Activated CD8-positive, alpha-beta T cell treated with anti-CD3 and anti-CD28 coated beads, Interleukin-2, amount 10 ng/mL, durations not matched to agents 7 days and 5 days (primary cell): ENCODE measurements at regions of chr1 and their contacts with region 1.

Region 1: DNA sequence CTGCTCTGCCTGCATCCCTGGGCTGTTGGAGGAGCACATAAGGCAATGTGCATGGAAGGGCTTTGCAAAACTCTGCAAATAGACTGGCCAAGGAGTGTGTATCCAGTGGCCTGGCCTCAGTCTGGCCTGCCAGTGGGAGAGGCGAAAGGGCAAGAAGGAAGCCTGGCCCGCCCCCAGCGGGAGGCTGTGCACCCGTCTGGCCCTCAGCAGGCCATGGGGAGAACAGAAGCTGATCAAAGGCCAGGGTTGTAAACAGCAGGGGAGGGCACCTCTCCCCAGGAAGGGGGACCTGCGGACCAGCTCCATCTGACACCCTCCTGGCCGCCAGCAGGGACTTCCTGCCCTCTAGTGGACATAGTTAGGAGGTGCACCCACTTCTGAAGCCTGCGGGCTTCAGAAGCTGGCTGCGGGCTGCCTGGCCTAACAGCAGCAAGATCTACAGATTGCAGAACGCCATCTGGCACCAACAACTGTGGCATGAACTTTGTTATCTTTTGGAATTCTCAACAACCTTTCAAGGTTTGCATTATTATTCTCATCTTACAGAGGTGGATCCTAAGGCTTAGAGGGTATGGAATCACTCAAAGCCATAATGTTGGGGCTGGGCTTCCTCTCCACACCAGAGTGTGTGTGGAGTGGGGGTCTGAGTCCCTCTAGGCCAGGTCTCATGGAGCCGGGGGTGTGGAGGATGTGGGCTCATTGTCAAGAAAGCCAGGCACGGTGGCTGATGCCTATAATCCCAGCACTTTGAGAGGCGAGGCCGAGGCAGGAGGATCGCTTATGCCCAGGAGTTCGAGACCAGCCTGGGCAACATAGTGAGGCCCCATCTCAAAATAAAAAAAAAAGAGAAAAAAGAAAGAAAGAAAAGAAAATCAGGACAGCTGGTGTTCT is 18.9 kb upstream of the CDK18 start:
- DNase-seq: peak; percentile 77
- ATAC-seq: peak; percentile 73
- H3K4me3 Mint-ChIP-seq: no peak overlapping the region
- H3K27ac Mint-ChIP-seq: no peak overlapping the region
- H3K4me1 Mint-ChIP-seq: peaks cover 30% of the 10 kb centered on the region
- H3K27me3 Mint-ChIP-seq: peaks cover 37% of the 10 kb centered on the region

Region 2: DNA sequence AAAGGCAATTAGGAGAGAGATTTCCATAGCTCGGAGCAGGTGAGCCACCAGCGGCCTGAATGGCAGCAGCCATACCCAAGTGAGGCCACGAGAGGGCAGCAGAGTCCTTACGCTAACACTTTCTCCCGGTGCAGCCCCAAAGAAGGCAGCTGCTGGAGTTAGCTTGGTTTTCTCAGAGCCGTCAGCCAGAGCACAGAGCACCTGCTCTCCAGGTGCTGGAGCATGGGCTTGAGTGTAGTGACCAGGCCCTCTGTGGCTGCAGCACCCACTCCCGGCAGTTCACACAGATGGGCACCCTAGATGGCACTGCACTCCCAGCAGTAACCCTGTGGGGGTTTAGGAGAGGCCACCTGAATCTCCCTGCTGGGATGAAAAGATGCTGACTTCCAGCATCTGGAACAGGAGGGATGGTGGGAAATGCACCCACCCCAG is 212.0 kb before region 1 on chr1:
- CTCF ChIA-PET with region 1: interaction called, 35 read pairs
- POLR2A ChIA-PET with region 1: no interaction called
- DNase-seq: peak; percentile 89
- ATAC-seq: peak; percentile 93
- H3K4me3 Mint-ChIP-seq: no peak overlapping the region
- H3K27ac Mint-ChIP-seq: no peak overlapping the region
- H3K4me1 Mint-ChIP-seq: peaks cover 22% of the 10 kb centered on the region
- H3K27me3 Mint-ChIP-seq: peaks cover 11% of the 10 kb centered on the region

Region 3: GRCh38 chr1:205335643-205336091 is 149.9 kb before region 1 on chr1:
- CTCF ChIA-PET with region 1: interaction called, 40 read pairs
- POLR2A ChIA-PET with region 1: no interaction called
- DNase-seq: peak; percentile 84
- ATAC-seq: peak; percentile 90
- H3K4me3 Mint-ChIP-seq: no peak overlapping the region
- H3K27ac Mint-ChIP-seq: no peak overlapping the region
- H3K4me1 Mint-ChIP-seq: peaks cover 11% of the 10 kb centered on the region
- H3K27me3 Mint-ChIP-seq: peaks cover 38% of the 10 kb centered on the region

Region 4: GRCh38 chr1:205374228-205375078 is 111.1 kb before region 1 on chr1:
- CTCF ChIA-PET with region 1: no interaction called
- POLR2A ChIA-PET with region 1: no interaction called
- DNase-seq: no peak
- ATAC-seq: no peak
- H3K4me3 Mint-ChIP-seq: no peak overlapping the region
- H3K27ac Mint-ChIP-seq: no peak overlapping the region
- H3K4me1 Mint-ChIP-seq: peaks cover 5% of the 10 kb centered on the region
- H3K27me3 Mint-ChIP-seq: peaks cover 34% of the 10 kb centered on the region

Region 5: GRCh38 chr1:205387845-205388244 is 97.7 kb before region 1 on chr1:
- CTCF ChIA-PET with region 1: interaction called, 11 read pairs
- POLR2A ChIA-PET with region 1: no interaction called
- DNase-seq: no peak
- ATAC-seq: no peak
- H3K4me3 Mint-ChIP-seq: no peak overlapping the region
- H3K27ac Mint-ChIP-seq: no peak overlapping the region
- H3K4me1 Mint-ChIP-seq: no peaks in the 10 kb centered on the region
- H3K27me3 Mint-ChIP-seq: peaks cover 8% of the 10 kb centered on the region

Region 6: DNA sequence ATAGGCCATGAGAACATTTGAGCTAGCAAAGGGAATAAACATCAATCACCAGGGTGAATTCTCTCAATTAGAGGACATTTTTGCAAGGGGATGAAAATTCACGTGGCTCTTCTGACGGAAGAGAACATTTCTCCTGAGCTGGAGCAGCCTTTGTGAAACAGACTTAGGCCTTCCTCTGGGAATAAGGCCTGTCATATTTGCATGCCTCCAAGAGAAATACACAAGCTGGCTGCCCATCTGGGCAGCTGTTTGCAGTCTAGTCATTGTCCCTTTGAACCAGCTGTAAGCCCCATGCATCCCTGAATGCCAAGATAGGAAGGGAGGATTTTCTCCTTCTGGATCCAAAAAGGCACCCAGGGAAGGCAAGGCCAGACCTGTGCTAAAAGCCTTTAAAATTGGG is 69.3 kb before region 1 on chr1:
- CTCF ChIA-PET with region 1: interaction called, 29 read pairs
- POLR2A ChIA-PET with region 1: no interaction called
- DNase-seq: no peak
- ATAC-seq: no peak
- H3K4me3 Mint-ChIP-seq: no peak overlapping the region
- H3K27ac Mint-ChIP-seq: no peak overlapping the region
- H3K4me1 Mint-ChIP-seq: no peaks in the 10 kb centered on the region
- H3K27me3 Mint-ChIP-seq: peaks cover 22% of the 10 kb centered on the region

Region 7: GRCh38 chr1:205440476-205441317 is 44.9 kb before region 1 on chr1:
- CTCF ChIA-PET with region 1: interaction called, 84 read pairs
- POLR2A ChIA-PET with region 1: interaction called, 3 read pairs
- DNase-seq: peak; percentile 85
- ATAC-seq: peak; percentile 96
- H3K4me3 Mint-ChIP-seq: peak overlapping the region; percentile 75
- H3K27ac Mint-ChIP-seq: peak overlapping the region; percentile 89
- H3K4me1 Mint-ChIP-seq: peaks cover 26% of the 10 kb centered on the region
- H3K27me3 Mint-ChIP-seq: peaks cover 9% of the 10 kb centered on the region

Region 8: GRCh38 chr1:205523891-205524793 is 38.6 kb after region 1 on chr1:
- CTCF ChIA-PET with region 1: interaction called, 274 read pairs
- POLR2A ChIA-PET with region 1: interaction called, 3 read pairs
- DNase-seq: peak; percentile 79
- ATAC-seq: no peak
- H3K4me3 Mint-ChIP-seq: no peak overlapping the region
- H3K27ac Mint-ChIP-seq: no peak overlapping the region
- H3K4me1 Mint-ChIP-seq: no peaks in the 10 kb centered on the region
- H3K27me3 Mint-ChIP-seq: no peaks in the 10 kb centered on the region